Activated CD4-positive, alpha-beta memory T cell treated with anti-CD3 and anti-CD28 coated beads for 36 hours (primary cell): ENCODE measurements at regions of chr6 and their contacts with region 1.

Region 1: GRCh38 chr6:90194371-90194841 is 102.2 kb downstream of the BACH2 start:
- DNase-seq: no peak
- H3K4me3 Mint-ChIP-seq: no peak overlapping the region
- H3K27ac Mint-ChIP-seq: peak overlapping the region; percentile 49
- H3K4me1 Mint-ChIP-seq: peaks cover 59% of the 10 kb centered on the region
- H3K27me3 Mint-ChIP-seq: no peaks in the 10 kb centered on the region

Region 2: GRCh38 chr6:89984926-89985750 is 209.3 kb before region 1 on chr6:
- CTCF ChIA-PET with region 1: no interaction called
- POLR2A ChIA-PET with region 1: no interaction called
- intact Hi-C with region 1: no loop called
- DNase-seq: no peak
- H3K4me3 Mint-ChIP-seq: no peak overlapping the region
- H3K27ac Mint-ChIP-seq: peak overlapping the region; percentile 29
- H3K4me1 Mint-ChIP-seq: peaks cover 62% of the 10 kb centered on the region
- H3K27me3 Mint-ChIP-seq: no peaks in the 10 kb centered on the region

Region 3: DNA sequence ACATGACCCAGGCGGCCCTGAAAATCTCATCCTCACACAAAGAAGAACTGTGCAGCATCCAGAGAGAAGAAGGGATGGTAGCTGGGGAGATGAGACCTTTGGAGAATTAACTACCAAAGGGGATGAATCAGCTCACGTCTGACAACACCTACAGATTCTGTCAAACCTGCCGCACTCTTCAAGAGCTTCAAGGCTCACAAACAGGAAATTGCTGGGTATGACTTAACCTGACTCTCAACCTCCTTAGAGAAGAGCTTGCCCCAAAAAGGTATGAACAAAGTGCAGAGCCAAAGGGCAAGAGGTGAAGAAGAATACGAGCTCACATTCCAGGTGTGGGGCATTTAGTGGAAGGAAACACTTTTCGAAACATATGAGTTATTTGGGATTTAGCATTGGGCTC is 37.5 kb before region 1 on chr6:
- CTCF ChIA-PET with region 1: no interaction called
- POLR2A ChIA-PET with region 1: no interaction called
- intact Hi-C with region 1: loop called (anchors 5 kb)
- DNase-seq: peak; percentile 61
- H3K4me3 Mint-ChIP-seq: no peak overlapping the region
- H3K27ac Mint-ChIP-seq: peak overlapping the region; percentile 76
- H3K4me1 Mint-ChIP-seq: peaks cover 58% of the 10 kb centered on the region
- H3K27me3 Mint-ChIP-seq: no peaks in the 10 kb centered on the region

Region 4: DNA sequence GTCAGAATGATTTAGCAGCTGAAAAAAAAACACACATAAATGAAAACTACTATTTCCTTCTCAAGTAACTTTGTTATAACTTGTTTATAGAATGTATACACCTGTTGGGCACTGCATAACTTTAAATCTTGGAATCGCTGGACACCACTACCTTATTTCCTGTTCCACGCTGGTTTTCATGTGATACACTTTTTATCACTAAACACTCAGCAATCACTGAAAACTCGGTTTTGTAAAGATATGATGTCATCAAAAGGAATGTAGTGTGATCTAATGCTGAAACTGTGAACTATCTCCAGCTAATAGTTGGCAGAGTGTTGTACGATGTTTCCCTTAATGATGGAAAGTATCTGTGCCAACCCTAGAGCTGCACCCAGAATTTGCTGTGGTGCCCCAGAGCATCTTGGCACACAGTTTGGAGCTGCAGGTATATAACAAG is 25.7 kb before region 1 on chr6:
- CTCF ChIA-PET with region 1: no interaction called
- POLR2A ChIA-PET with region 1: no interaction called
- intact Hi-C with region 1: no loop called
- DNase-seq: no peak
- H3K4me3 Mint-ChIP-seq: no peak overlapping the region
- H3K27ac Mint-ChIP-seq: no peak overlapping the region
- H3K4me1 Mint-ChIP-seq: peaks cover 36% of the 10 kb centered on the region
- H3K27me3 Mint-ChIP-seq: no peaks in the 10 kb centered on the region

Region 5: DNA sequence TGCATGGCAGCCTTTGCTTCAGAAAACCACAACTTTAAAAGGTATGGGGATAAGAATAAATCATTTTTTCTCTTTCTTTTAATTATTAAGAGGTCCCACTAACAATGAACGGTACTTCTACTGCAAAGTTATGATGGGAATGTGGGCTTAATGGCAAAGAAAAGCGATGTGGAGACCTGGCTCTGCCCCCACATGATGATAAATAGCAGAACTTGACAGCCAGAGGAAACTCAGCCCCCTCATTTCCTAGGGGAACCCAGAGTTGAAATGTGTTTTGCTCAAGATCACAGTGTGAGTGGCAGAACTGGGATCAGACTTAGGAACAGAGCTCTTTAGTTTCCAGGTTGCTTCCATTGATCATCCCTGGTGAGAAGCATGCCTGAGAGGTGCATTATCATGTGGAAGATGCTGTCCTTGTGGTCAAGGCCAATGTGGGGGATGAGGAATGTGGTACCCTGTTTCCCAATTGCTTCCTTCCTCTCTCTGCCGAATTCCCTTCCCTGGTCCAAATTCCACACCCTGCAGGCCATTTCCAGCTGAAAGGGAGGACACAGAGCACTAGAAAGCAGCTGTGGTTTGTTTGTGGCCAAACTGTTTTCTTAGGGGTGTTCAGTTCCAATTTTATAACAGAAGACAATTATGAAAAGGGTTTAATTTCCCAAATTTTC is 36.3 kb after region 1 on chr6:
- CTCF ChIA-PET with region 1: no interaction called
- POLR2A ChIA-PET with region 1: no interaction called
- intact Hi-C with region 1: loop called (anchors 2 kb)
- DNase-seq: no peak
- H3K4me3 Mint-ChIP-seq: no peak overlapping the region
- H3K27ac Mint-ChIP-seq: no peak overlapping the region
- H3K4me1 Mint-ChIP-seq: peaks cover 88% of the 10 kb centered on the region
- H3K27me3 Mint-ChIP-seq: no peaks in the 10 kb centered on the region

Region 6: DNA sequence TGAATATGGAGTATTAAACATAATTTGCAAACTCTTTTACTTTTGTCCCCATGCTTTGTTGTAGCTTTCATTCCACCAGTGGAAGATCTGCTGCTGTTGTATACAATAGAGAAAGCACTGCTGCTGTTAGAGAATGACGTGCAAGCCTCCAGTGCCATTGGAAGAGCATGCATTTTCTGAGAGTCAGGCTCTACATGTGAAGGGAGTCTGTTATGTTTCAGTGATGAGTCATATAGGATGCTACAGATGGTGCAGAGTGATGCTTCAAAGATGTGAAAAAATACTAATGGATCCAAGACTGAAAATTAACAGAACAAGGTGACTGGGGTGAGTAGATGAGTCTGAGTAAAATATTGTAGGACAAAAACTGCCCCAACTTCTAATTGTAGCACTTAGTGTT is 124.6 kb after region 1 on chr6:
- CTCF ChIA-PET with region 1: no interaction called
- POLR2A ChIA-PET with region 1: no interaction called
- intact Hi-C with region 1: no loop called
- DNase-seq: peak; percentile 51
- H3K4me3 Mint-ChIP-seq: no peak overlapping the region
- H3K27ac Mint-ChIP-seq: peak overlapping the region; percentile 59
- H3K4me1 Mint-ChIP-seq: peaks cover 29% of the 10 kb centered on the region
- H3K27me3 Mint-ChIP-seq: peaks cover 3% of the 10 kb centered on the region